Activated CD4-positive, alpha-beta T cell treated with anti-CD3 and anti-CD28 coated beads for 36 hours (primary cell): ENCODE measurements at regions of chr12 and their contacts with region 1.

Region 1: DNA sequence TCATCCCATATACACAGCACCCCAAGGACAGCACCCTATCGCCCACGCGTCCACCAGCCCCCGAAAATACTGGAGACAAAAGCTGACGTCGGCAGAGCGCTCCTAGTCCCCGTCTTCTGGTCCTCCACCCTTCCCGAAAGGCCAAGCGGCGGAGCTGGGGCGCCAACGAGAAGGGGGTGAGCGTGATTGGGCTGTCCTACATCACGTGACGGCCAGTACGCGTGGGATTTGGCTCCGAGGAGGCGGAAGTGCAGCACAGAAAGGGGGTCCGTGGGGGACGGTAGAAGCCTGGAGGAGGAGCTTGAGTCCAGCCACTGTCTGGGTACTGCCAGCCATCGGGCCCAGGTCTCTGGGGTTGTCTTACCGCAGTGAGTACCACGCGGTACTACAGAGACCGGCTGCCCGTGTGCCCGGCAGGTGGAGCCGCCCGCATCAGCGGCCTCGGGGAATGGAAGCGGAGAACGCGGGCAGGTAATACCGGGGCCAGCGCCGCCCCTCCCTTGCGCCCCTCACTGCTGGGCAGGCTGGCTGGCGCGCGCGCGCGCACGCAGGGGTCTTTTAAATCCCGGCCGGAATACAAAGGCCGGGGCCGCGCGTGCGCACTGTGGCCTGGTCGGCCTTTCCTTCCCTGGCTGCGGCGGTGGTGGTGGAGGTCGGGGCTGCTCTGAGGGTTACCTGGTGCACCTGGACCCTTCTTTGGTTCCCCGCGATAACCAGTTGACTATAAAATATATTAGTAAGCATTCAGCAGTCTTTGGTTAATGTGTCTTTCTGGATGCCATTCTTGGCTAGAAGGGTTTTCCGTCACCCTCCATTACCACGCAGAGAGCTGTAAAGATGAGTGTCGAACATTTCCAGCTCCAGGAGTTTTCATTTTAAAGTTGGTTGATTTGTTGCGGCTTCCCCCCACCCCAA is at the start of gene TDG:
- DNase-seq: peak; percentile 99
- ATAC-seq: peak; percentile 94
- H3K4me3 Mint-ChIP-seq: peak within 1 kb of the TSS; percentile 94
- H3K27ac Mint-ChIP-seq: peak within 1 kb of the TSS; percentile 98
- H3K4me1 Mint-ChIP-seq: peaks cover 48% of the 10 kb centered on the region
- H3K27me3 Mint-ChIP-seq: no peaks in the 10 kb centered on the region
- total RNA-seq, gene TDG: 35.4 to 37.2 TPM

Region 2: DNA sequence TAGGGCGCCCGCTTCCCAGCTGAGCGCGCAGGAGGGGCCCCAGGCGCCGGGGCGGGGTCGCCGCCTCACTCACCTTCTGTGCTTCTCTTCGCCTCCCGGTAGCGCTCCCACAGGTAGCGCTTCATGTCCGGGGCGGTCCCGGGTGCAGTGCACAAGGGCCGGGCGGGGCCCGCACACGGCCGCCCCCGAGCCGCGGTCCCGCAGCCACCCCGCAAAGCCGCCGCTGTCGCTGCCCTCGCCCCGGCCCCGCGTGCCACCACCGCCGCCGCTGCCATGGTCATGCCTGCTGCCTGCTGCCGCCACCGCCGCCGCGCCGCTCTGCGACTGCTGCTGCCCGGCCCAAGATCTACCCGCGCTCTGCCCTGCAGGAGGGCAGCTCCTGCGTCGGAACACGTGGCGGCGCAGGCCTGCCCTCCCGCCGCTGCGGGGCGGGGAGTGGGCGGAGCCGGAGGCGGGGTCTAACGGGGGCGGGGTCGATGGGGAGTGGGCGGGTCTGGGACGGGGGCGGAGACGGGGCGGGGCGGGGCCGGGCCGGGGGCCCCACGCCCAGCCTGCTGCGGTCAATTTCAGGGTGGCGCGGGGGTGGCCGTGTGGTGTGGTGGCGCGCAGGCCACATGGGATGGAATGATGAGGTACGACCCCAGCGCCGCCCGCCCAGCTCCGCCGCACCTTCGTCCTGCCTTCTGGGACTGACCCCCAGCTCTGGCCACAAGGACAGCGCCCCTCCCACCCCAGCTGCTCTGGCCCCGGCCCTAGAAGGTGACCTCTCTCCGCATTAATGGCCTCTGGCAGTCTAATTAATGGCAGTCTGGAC is 124.8 kb before region 1 on chr12 and contains the start of gene NT5DC3:
- CTCF ChIA-PET with region 1: no interaction called
- POLR2A ChIA-PET with region 1: interaction called, 3 read pairs
- intact Hi-C with region 1: loop called (anchors 1 kb)
- DNase-seq: peak; percentile 91
- ATAC-seq: peak; percentile 88
- H3K4me3 Mint-ChIP-seq: peak within 1 kb of the TSS; percentile 77
- H3K27ac Mint-ChIP-seq: peak within 1 kb of the TSS; percentile 63
- H3K4me1 Mint-ChIP-seq: peaks cover 22% of the 10 kb centered on the region
- H3K27me3 Mint-ChIP-seq: no peaks in the 10 kb centered on the region
- total RNA-seq, gene NT5DC3: 7.3 to 8.9 TPM

Region 3: DNA sequence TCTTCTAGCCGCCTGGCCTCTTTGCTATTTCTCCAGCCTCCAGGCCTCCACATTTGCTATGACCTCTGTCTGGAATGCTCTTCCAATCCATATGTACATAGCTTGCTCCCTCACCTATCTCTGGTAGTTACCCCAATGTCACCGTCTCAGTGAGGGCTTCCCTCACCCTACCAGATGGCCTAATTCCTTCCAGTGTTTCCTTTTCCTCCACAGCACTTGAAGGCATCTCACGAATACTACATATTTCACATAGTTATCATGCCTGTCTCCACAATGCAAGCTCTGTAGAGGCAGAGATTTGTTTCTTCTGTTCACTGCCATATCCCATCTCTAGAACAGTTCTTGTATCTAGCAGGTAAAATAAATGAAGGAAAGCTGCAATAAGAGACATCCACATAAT is 57.0 kb before region 1 on chr12:
- CTCF ChIA-PET with region 1: no interaction called
- POLR2A ChIA-PET with region 1: interaction called, 12 read pairs
- intact Hi-C with region 1: no loop called
- DNase-seq: no peak
- ATAC-seq: no peak
- H3K4me3 Mint-ChIP-seq: no peak overlapping the region
- H3K27ac Mint-ChIP-seq: no peak overlapping the region
- H3K4me1 Mint-ChIP-seq: peaks cover 40% of the 10 kb centered on the region
- H3K27me3 Mint-ChIP-seq: no peaks in the 10 kb centered on the region

Region 4: GRCh38 chr12:103947871-103948555 is 17.8 kb before region 1 on chr12:
- CTCF ChIA-PET with region 1: interaction called, 32 read pairs
- POLR2A ChIA-PET with region 1: interaction called, 9 read pairs
- intact Hi-C with region 1: no loop called
- DNase-seq: no peak
- ATAC-seq: no peak
- H3K4me3 Mint-ChIP-seq: no peak overlapping the region
- H3K27ac Mint-ChIP-seq: peak overlapping the region; percentile 72
- H3K4me1 Mint-ChIP-seq: peaks cover 65% of the 10 kb centered on the region
- H3K27me3 Mint-ChIP-seq: no peaks in the 10 kb centered on the region

Region 5: GRCh38 chr12:104137913-104138796 is 172.3 kb after region 1 on chr12 and contains the start of gene NFYB:
- CTCF ChIA-PET with region 1: no interaction called
- POLR2A ChIA-PET with region 1: interaction called, 3 read pairs
- intact Hi-C with region 1: loop called (anchors 1 to 5 kb)
- DNase-seq: peak; percentile 95
- ATAC-seq: peak; percentile 98
- H3K4me3 Mint-ChIP-seq: peak within 1 kb of the TSS; percentile 83
- H3K27ac Mint-ChIP-seq: peak within 1 kb of the TSS; percentile 90
- H3K4me1 Mint-ChIP-seq: peaks cover 19% of the 10 kb centered on the region
- H3K27me3 Mint-ChIP-seq: no peaks in the 10 kb centered on the region
- total RNA-seq, gene NFYB: 18.8 to 27.2 TPM

Region 6: DNA sequence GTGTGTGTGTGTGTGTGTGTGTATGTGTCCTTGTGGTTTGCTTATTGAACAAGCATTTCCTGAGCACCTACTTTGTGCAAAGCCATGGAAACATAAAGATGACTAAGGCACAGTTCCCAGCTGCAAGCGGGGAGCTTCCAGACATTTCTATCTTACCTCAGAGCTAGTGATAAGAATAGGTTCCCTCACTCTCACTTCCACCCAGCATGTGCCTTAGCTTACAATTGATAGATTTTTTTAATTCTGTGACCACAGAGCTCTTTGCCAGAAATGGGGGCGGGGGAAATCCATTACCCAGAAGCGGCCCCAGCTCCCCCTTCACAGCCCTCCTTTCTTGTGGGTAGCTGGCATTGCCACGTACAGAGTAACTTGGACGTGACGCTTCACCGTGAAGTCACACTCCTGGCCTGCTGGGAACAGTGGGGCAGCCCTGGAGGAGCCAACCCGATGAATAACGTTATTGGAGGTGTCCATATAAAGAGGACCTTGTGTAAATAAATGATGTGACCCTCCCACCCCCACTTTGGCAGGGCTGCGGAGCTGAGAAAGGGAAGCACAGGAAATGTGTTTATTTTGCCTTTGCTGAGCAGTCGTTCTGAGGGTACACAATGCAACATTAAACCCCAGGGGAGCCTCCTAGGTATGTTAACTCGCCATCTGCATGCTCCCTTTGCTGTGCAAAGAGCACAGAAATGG is 729.8 kb after region 1 on chr12:
- CTCF ChIA-PET with region 1: no interaction called
- POLR2A ChIA-PET with region 1: no interaction called
- intact Hi-C with region 1: loop called in 1 of 2 experiments (anchors 5 kb)
- DNase-seq: peak; percentile 92
- ATAC-seq: peak; percentile 86
- H3K4me3 Mint-ChIP-seq: peak overlapping the region; percentile 36
- H3K27ac Mint-ChIP-seq: peak overlapping the region; percentile 92
- H3K4me1 Mint-ChIP-seq: peaks cover 69% of the 10 kb centered on the region
- H3K27me3 Mint-ChIP-seq: no peaks in the 10 kb centered on the region